ENCODE measurements at regions of chr2 and their contacts with region 1.

Region 1: DNA sequence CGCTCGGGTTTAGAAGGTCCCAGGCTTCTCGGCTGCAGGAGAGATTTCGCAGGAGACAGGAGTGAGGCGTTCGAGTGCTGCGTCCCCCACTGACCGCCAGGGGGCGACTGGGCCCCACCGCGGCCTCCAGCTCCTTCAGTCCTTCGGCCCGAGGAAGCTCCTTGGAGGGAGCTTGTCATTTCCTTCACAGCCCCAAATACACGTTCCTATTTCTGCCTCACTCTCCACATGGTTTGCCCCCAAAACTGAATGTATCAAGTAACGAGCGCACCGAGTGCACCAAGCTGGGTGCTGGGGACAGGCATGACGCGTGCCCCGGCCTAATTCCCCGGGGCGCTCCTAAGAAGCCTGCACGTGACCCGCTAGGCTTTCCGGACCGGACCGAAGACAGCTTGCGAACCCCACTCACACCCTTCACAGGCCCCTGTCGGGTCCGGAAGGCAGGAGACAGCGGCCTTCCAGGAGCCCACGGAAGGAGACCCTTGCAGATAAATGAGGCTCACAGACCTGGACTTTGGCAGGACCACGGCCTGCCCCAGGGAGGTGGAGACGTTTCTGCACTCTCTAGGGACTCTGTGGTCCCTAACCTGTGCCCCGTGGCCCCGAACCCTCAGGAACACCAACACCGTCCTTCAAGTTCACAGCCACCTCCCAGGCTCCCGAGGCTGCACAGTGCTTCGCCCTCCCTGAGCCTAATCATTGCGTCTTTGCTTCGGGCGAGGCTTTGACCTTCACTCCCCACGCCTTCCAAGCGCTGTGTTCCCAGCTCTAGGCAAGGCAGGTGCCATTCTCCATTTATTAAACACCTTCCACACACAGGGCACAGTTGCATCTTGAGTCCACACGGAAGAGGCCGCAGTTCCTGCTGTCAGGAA is 13.0 kb upstream of the FAHD2A start:
- DNase-seq: peak; percentile 88

Region 2: GRCh38 chr2:95402370-95403203 is 13.1 kb after region 1 on chr2 and contains the start of gene FAHD2A:
- CTCF ChIA-PET with region 1: interaction called, 17 read pairs
- POLR2A ChIA-PET with region 1: interaction called, 32 read pairs
- DNase-seq: peak; percentile 96

Region 3: DNA sequence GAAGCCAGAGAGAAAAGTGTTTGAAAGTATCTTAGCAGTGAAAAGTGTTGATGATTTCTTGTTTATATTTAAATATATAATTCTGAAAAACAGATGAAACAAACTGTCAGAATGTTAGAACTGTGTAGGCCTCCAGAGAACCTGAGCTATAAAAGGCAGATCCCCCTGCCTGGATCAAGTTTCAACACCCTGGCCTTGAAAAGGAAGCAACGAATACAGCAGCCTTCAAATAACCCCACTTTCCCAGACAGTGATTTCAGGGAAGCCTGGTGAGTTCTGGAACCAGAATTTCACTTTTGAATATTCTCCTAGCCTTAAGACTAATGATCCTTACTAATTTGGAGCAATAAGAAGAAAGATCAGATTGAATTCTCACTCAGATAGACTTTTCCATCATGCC is 189.1 kb after region 1 on chr2:
- CTCF ChIA-PET with region 1: no interaction called
- POLR2A ChIA-PET with region 1: no interaction called
- DNase-seq: no peak